Activated CD8-positive, alpha-beta T cell treated with anti-CD3 and anti-CD28 coated beads for 36 hours (primary cell): ENCODE measurements at regions of chr5 and their contacts with region 1.

Region 1: GRCh38 chr5:41924872-41925554 is at the start of gene FBXO4:
- DNase-seq: peak; percentile 90
- ATAC-seq: peak; percentile 98
- H3K4me3 Mint-ChIP-seq: peak within 1 kb of the TSS; percentile 72
- H3K27ac Mint-ChIP-seq: peak within 1 kb of the TSS; percentile 93
- H3K4me1 Mint-ChIP-seq: peaks cover 11% of the 10 kb centered on the region
- H3K27me3 Mint-ChIP-seq: no peaks in the 10 kb centered on the region
- CTCF ChIP-seq: peak; percentile 46
- total RNA-seq, gene FBXO4: 18.5 to 21.0 TPM

Region 2: GRCh38 chr5:41903892-41904799 is 20.9 kb before region 1 on chr5 and contains the start of gene RIMOC1:
- CTCF ChIA-PET with region 1: interaction called, 5 read pairs
- POLR2A ChIA-PET with region 1: interaction called, 23 read pairs
- intact Hi-C with region 1: loop called (anchors 2 kb)
- DNase-seq: peak; percentile 97
- ATAC-seq: peak; percentile 96
- H3K4me3 Mint-ChIP-seq: peak within 1 kb of the TSS; percentile 95
- H3K27ac Mint-ChIP-seq: peak within 1 kb of the TSS; percentile 99
- H3K4me1 Mint-ChIP-seq: peaks cover 41% of the 10 kb centered on the region
- H3K27me3 Mint-ChIP-seq: peaks cover 3% of the 10 kb centered on the region
- CTCF ChIP-seq: no peak
- total RNA-seq, gene RIMOC1: 19.5 to 19.8 TPM